Vagina (tissue), 2 donors: ENCODE measurements at regions of chr6 and their contacts with region 1.

Region 1: GRCh38 chr6:30883685-30884520 is at the start of gene DDR1:
- DNase-seq: peak in 1 of 2 donors; percentile 96
- H3K4me3 ChIP-seq: peak within 1 kb of the TSS; percentile 61 to 82
- H3K27ac ChIP-seq: peak within 1 kb of the TSS; percentile 95
- H3K4me1 ChIP-seq: peaks cover 73% of the 10 kb centered on the region
- H3K27me3 ChIP-seq: no peaks in the 10 kb centered on the region
- CTCF ChIP-seq: no peak
- POLR2A ChIP-seq: peak in 1 of 2 donors; percentile 30
- total RNA-seq, gene DDR1: 71.5 TPM

Region 2: GRCh38 chr6:30686908-30687658 is 196.8 kb before region 1 on chr6:
- intact Hi-C with region 1: loop called (anchors 10 kb)
- DNase-seq: peak in 1 of 2 donors; percentile 99
- H3K4me3 ChIP-seq: peak overlapping the region; percentile 93 to 97
- H3K27ac ChIP-seq: peak overlapping the region; percentile 92
- H3K4me1 ChIP-seq: peaks cover 70% of the 10 kb centered on the region
- H3K27me3 ChIP-seq: no peaks in the 10 kb centered on the region
- CTCF ChIP-seq: no peak
- POLR2A ChIP-seq: peak in 1 of 2 donors; percentile 43

Region 3: GRCh38 chr6:30742316-30743098 is 141.4 kb before region 1 on chr6 and contains the start of gene FLOT1:
- intact Hi-C with region 1: loop called (anchors 2 kb)
- DNase-seq: peak in 1 of 2 donors; percentile 98
- H3K4me3 ChIP-seq: peak within 1 kb of the TSS; percentile 65 to 89
- H3K27ac ChIP-seq: peak within 1 kb of the TSS; percentile 95
- H3K4me1 ChIP-seq: peaks cover 57% of the 10 kb centered on the region
- H3K27me3 ChIP-seq: no peaks in the 10 kb centered on the region
- CTCF ChIP-seq: no peak
- POLR2A ChIP-seq: peak in 1 of 2 donors; percentile 61
- total RNA-seq, gene FLOT1: 165 TPM